Sciatic nerve (tissue), 2 donors: ENCODE measurements at regions of chr11 and their contacts with region 1.

Region 1: GRCh38 chr11:120637131-120637530 is 125.6 kb downstream of the GRIK4 start:
- DNase-seq: no peak
- ATAC-seq: no peak

Region 2: DNA sequence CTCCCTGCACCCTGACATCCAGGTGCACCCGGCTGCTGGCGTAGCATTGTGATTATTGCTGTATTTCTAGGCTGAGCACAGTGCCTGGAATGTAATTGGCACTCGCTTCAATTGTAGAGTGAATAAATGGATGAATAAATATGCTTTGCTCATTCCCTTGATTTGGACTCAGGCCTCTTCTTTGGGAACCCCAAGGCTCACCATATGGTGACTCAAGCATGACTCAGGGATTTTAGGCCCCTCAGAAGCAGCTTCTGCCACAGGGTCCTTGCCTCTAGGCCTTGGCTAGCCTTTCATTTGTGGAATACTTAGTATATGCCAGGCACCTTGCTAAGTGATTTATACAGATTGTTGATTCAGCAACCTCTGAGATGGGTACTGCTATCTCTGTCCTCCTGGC is 46.7 kb before region 1 on chr11:
- intact Hi-C with region 1: loop called (anchors 2 kb)
- DNase-seq: no peak
- ATAC-seq: no peak

Region 3: GRCh38 chr11:120652705-120653335 is 15.7 kb after region 1 on chr11:
- intact Hi-C with region 1: no loop called
- DNase-seq: no peak
- ATAC-seq: no peak